GM12878 (cell line): ENCODE measurements at regions of chr1 and their contacts with region 1.

Region 1: GRCh38 chr1:204941421-204942338 is 71.0 kb downstream of the NFASC start:
- DNase-seq: no peak
- ATAC-seq: peak; percentile 88
- H3K4me3 ChIP-seq: no peak overlapping the region
- H3K27ac ChIP-seq: no peak overlapping the region
- H3K4me1 ChIP-seq: no peaks in the 10 kb centered on the region
- H3K27me3 ChIP-seq: peaks cover 0 to 6% of the 10 kb centered on the region in 2 experiments; a peak in 3 of 4 replicates
- CTCF ChIP-seq: peak; percentile 81 to 95 (median 91)
- EP300 ChIP-seq: no peak
- POLR2A ChIP-seq: no peak
- RAD21 ChIP-seq: peak; percentile 51

Region 2: GRCh38 chr1:204828338-204828850 is 113.3 kb before region 1 on chr1:
- CTCF ChIA-PET with region 1: no interaction called
- POLR2A ChIA-PET with region 1: no interaction called
- RAD21 ChIA-PET with region 1: no interaction called
- SMC1A ChIA-PET with region 1: interaction called, 3 read pairs
- in situ Hi-C with region 1: no loop called
- intact Hi-C with region 1: loop called (anchors 5 kb)
- DNase-seq: no peak
- ATAC-seq: peak; percentile 61
- H3K4me3 ChIP-seq: no peak overlapping the region
- H3K27ac ChIP-seq: no peak overlapping the region
- H3K4me1 ChIP-seq: no peaks in the 10 kb centered on the region
- H3K27me3 ChIP-seq: peaks cover 9 to 12% of the 10 kb centered on the region in 2 experiments
- CTCF ChIP-seq: no peak
- EP300 ChIP-seq: no peak
- POLR2A ChIP-seq: no peak
- RAD21 ChIP-seq: no peak

Region 3: DNA sequence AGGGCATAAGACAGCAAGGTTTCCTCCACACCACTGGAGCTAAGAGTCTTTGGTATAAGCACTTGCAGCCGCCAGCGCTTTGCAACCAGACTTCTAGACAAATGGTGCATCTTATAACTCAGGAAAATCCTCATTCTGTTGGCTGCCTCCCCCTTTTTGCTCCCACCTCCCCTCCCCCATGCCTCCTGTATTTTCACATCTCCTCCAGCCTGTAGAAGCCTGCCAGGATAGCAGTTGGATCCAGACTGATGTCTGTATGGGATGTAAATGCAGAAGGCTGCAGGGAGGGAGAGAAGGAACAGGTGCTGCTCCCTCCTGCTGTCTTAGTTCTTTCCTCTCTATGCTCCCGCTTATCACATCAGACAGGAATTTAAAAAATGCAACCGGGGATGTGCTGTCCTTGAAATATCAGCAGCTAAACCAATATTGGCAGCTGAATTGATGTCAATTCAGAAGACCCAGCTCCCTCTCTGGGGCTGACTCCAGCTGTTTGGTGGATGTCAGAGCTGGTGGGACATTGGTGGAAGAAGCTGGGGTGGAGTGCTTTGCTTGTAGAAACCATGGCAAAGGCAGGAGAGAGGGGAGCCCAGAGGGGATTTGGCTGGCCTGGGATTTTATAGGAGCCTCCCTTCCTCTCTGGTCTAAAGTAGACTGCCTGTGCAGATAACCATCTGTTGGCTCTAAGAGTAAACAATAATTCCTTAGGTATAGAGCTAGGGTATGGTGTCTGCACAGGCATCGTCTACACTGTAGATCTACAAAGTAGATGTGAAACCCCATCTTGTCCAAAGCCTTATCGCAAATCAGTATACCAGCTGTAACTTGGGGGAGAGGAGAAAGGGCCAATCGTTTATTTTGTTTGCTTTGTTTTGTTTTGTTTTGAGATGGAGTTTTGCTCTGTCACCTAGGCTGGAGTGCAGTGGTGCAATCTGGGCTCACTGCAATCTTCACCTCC is 17.4 kb before region 1 on chr1:
- CTCF ChIA-PET with region 1: interaction called, 11 read pairs
- POLR2A ChIA-PET with region 1: no interaction called
- RAD21 ChIA-PET with region 1: no interaction called
- SMC1A ChIA-PET with region 1: interaction called, 3 read pairs
- in situ Hi-C with region 1: no loop called
- intact Hi-C with region 1: no loop called
- DNase-seq: no peak
- ATAC-seq: no peak
- H3K4me3 ChIP-seq: no peak overlapping the region
- H3K27ac ChIP-seq: no peak overlapping the region
- H3K4me1 ChIP-seq: no peaks in the 10 kb centered on the region
- H3K27me3 ChIP-seq: peaks cover 0 to 3% of the 10 kb centered on the region in 2 experiments; a peak in 3 of 4 replicates
- CTCF ChIP-seq: no peak
- EP300 ChIP-seq: no peak
- POLR2A ChIP-seq: no peak
- RAD21 ChIP-seq: no peak

Region 4: GRCh38 chr1:205300886-205301821 is 359.5 kb after region 1 on chr1:
- CTCF ChIA-PET with region 1: no interaction called
- POLR2A ChIA-PET with region 1: no interaction called
- RAD21 ChIA-PET with region 1: no interaction called
- SMC1A ChIA-PET with region 1: no interaction called
- in situ Hi-C with region 1: no loop called
- intact Hi-C with region 1: no loop called
- DNase-seq: no peak
- ATAC-seq: peak; percentile 62
- H3K4me3 ChIP-seq: no peak overlapping the region
- H3K27ac ChIP-seq: no peak overlapping the region
- H3K4me1 ChIP-seq: no peaks in the 10 kb centered on the region
- H3K27me3 ChIP-seq: no peaks in the 10 kb centered on the region; a peak in 1 of 4 replicates
- CTCF ChIP-seq: no peak
- EP300 ChIP-seq: no peak
- POLR2A ChIP-seq: no peak
- RAD21 ChIP-seq: no peak